ENCODE measurements at regions of chr17 and their contacts with region 1.

Region 1: DNA sequence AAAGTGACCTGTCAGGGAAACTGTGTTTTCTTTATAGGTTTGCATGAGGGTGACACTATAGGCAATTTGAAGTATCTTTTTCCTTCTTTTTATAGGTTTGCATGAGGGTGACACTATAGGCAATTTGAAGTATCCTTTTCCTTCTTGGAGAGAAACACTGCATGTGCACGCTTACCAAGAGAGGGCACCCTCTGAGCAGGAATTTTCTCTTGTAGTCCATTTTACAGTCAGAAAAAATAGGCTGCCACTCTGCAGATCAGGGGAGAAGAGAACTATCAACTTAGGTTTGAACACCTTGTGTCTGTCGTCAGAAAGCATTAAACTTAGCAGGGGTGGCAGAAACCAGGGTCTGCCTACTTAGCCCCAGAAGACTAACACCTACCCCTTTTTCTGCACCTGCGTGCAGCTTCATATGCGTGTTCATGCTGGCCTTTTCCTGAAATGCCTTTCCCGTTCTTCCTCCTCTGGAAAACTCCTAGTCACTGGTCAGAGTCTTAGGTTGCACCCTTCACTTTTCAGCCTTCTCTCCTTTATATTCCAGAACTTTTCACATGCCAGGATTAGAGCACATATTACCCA is 16.4 kb upstream of the SMIM36 start:
- DNase-seq: no peak
- H3K4me3 Mint-ChIP-seq: no peak overlapping the region
- H3K27ac Mint-ChIP-seq: no peak overlapping the region
- H3K4me1 Mint-ChIP-seq: peaks cover 9% of the 10 kb centered on the region
- H3K27me3 Mint-ChIP-seq: peaks cover 5% of the 10 kb centered on the region

Region 2: DNA sequence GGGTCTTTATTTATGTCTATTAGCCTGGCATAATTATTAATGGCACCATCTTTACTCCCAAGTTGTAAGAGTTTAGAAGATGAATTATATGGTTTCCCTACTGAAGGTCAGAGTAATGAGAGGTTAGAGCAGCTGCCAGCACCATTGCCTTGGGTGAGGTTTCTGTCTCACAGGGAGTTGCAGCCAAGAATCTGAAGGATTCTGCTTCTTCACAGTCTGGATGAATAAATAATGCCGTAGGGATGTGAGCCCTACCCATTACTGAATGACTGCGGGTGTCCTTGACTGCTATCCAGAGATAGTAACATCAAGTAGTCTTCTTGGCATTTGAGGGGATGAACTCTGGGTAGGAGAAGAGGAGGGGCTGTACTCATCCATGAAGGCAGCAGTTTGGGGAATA is 36.5 kb after region 1 on chr17:
- intact Hi-C with region 1: no loop called
- DNase-seq: no peak
- H3K4me3 Mint-ChIP-seq: no peak overlapping the region
- H3K27ac Mint-ChIP-seq: no peak overlapping the region
- H3K4me1 Mint-ChIP-seq: no peaks in the 10 kb centered on the region
- H3K27me3 Mint-ChIP-seq: peaks cover 7% of the 10 kb centered on the region

Region 3: GRCh38 chr17:55576996-55577586 is 49.5 kb after region 1 on chr17:
- intact Hi-C with region 1: loop called (anchors 2 kb)
- DNase-seq: peak; percentile 14
- H3K4me3 Mint-ChIP-seq: no peak overlapping the region
- H3K27ac Mint-ChIP-seq: no peak overlapping the region
- H3K4me1 Mint-ChIP-seq: peaks cover 5% of the 10 kb centered on the region
- H3K27me3 Mint-ChIP-seq: peaks cover 17% of the 10 kb centered on the region

Region 4: DNA sequence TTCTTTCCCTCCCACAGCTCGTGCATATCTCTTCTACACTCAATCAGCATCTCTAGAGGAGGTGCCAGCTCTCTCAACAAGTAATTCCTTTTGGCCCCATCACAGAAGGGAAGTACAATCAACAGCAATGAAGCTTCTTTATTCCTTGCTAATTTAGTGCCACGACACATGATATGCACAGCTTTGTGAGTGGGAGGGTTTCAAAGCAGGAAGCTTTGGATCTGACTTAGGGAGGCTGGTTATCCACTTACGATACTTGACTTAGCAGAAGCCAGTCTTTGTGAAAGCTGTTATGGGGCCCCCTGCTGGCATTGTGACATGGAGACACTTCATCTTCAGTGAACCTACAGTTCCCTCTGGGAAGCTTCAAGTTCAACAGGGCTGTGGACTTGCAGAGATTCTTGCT is 114.0 kb after region 1 on chr17:
- intact Hi-C with region 1: loop called (anchors 1 kb)
- DNase-seq: peak; percentile 4
- H3K4me3 Mint-ChIP-seq: no peak overlapping the region
- H3K27ac Mint-ChIP-seq: no peak overlapping the region
- H3K4me1 Mint-ChIP-seq: no peaks in the 10 kb centered on the region
- H3K27me3 Mint-ChIP-seq: no peaks in the 10 kb centered on the region

Region 5: GRCh38 chr17:55770148-55770870 is 242.7 kb after region 1 on chr17:
- intact Hi-C with region 1: loop called (anchors 1 kb)
- DNase-seq: no peak
- H3K4me3 Mint-ChIP-seq: no peak overlapping the region
- H3K27ac Mint-ChIP-seq: no peak overlapping the region
- H3K4me1 Mint-ChIP-seq: no peaks in the 10 kb centered on the region
- H3K27me3 Mint-ChIP-seq: no peaks in the 10 kb centered on the region

Region 6: DNA sequence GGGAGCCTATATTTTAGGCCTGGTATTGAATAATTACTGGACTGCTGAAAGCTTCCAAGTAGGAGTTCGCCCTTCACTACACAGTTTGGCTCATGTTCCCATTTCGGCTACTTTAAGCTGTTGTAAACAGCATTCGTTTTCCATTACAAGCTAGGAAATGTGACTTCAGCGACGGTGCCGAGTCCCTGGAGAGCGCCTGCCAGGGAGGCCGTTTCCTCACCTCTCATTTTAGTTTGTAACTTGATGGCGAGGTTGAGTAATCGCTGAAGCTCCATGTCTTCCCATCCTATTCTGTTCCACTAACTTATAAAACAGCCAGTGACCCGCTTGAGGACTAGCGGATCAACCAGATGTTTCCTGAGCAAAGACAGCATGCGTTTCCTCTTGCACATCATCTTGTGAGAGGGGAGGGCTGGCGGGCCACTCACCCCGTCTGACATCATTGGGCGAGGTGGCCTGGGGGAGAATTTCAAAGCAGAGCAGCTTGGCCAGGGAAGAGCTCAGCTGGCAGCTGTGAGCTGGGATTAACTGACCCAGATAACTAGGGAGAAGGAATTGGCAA is 256.1 kb after region 1 on chr17:
- intact Hi-C with region 1: no loop called
- DNase-seq: no peak
- H3K4me3 Mint-ChIP-seq: no peak overlapping the region
- H3K27ac Mint-ChIP-seq: no peak overlapping the region
- H3K4me1 Mint-ChIP-seq: no peaks in the 10 kb centered on the region
- H3K27me3 Mint-ChIP-seq: peaks cover 6% of the 10 kb centered on the region

Region 7: GRCh38 chr17:56319517-56319916 is 791.9 kb after region 1 on chr17:
- intact Hi-C with region 1: loop called (anchors 1 kb)
- DNase-seq: no peak
- H3K4me3 Mint-ChIP-seq: no peak overlapping the region
- H3K27ac Mint-ChIP-seq: no peak overlapping the region
- H3K4me1 Mint-ChIP-seq: no peaks in the 10 kb centered on the region
- H3K27me3 Mint-ChIP-seq: peaks cover 11% of the 10 kb centered on the region